RWPE1 (cell line): ENCODE measurements at regions of chr6 and their contacts with region 1.

Region 1: DNA sequence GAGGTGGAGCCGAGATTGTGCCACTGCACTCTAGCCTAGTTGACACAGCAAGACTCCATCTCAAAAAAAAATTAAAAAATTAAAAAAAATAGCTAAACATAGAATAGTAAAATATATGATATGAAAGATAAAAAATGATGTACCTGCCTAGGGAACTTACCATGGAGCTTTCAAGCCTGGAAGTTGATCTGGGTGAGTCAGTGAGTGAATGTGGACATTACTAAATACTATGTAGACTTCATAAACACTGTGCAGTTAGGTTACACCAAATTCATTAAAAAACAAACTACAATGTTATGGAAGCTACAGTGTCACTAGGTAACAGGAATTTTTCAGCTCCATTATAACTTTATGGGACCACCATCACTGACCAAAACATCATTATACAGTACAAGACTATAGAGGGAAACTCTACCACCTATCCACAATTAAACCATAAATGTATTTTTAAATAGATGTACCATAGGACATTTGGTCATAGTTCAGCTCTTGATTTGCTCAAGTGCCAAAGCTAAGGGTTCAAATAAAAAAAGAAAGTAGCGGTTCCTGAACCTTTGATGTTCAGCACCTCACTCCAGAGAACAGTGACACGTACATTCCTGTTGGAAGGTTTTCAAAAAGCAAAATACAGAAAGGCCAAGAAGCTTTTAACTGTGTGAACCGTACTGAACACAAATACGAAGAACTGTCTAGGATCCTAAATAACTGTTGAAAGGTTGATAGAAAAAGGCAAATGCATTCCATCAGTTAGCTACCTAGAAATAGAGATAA is 52.4 kb upstream of the SPDEF start:
- DNase-seq: no peak
- H3K27ac ChIP-seq: no peak overlapping the region
- CTCF ChIP-seq: no peak

Region 2: GRCh38 chr6:34459899-34460593 is 148.5 kb before region 1 on chr6:
- CTCF ChIA-PET with region 1: interaction called, 16 read pairs
- POLR2A ChIA-PET with region 1: interaction called, 3 read pairs
- DNase-seq: peak; percentile 46
- H3K27ac ChIP-seq: peak overlapping the region; percentile 52
- CTCF ChIP-seq: peak; percentile 55